ENCODE measurements at regions of chr10 and their contacts with region 1.

Region 1: DNA sequence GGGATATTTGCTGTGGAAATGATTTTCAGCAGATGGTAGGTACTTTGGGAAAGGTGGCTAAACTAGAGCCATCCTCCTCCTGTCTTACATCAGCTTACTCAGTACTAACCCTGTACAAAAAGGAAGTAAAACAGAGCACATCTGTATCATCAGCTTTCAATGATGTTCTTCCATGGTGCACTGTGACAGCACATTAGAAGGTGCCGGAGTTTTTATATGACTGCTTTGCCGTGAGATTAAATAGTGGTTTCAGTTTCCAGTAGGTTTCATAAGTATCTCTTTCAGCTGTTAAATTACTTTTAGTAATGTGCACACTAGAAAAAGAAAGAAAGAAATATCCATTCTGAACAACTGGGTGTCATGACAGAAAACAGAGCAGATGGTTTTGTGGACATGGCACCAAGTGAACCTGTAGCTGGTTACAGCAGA is 86.5 kb downstream of the ARID5B start:
- DNase-seq: no peak
- ATAC-seq: peak; percentile 90
- H3K4me3 Mint-ChIP-seq: peak overlapping the region; percentile 79
- H3K27ac Mint-ChIP-seq: peak overlapping the region; percentile 97
- H3K4me1 Mint-ChIP-seq: peaks cover 92% of the 10 kb centered on the region
- H3K27me3 Mint-ChIP-seq: no peaks in the 10 kb centered on the region
- CTCF ChIP-seq: no peak

Region 2: DNA sequence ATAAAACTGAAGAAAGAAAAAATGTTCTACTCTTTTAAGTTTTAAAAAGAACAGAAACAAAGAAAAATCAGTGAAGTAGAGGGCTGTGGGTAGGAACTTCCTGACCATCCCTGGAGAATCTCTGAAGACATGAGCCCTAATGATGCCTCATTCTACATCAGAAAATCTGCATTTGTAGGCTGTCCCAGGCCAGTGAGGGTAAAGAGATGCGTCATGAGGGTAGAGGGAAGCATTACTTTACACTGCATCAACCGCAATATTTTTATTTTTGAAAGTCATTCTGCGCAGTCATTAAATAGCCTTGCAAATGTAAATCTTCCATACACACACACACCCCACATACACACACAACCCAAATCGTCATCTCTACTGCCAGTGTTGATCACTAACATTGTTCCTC is 407.4 kb before region 1 on chr10:
- CTCF ChIA-PET with region 1: no interaction called
- POLR2A ChIA-PET with region 1: no interaction called
- intact Hi-C with region 1: no loop called
- DNase-seq: no peak
- ATAC-seq: no peak
- H3K4me3 Mint-ChIP-seq: no peak overlapping the region
- H3K27ac Mint-ChIP-seq: no peak overlapping the region
- H3K4me1 Mint-ChIP-seq: no peaks in the 10 kb centered on the region
- H3K27me3 Mint-ChIP-seq: peaks cover 4% of the 10 kb centered on the region
- CTCF ChIP-seq: no peak

Region 3: GRCh38 chr10:61896854-61897661 is 90.9 kb before region 1 on chr10:
- CTCF ChIA-PET with region 1: interaction called, 18 read pairs
- POLR2A ChIA-PET with region 1: interaction called, 270 read pairs
- intact Hi-C with region 1: loop called (anchors 1 kb)
- DNase-seq: peak; percentile 43
- ATAC-seq: peak; percentile 71
- H3K4me3 Mint-ChIP-seq: peak overlapping the region; percentile 97
- H3K27ac Mint-ChIP-seq: peak overlapping the region; percentile 98
- H3K4me1 Mint-ChIP-seq: peaks cover 37% of the 10 kb centered on the region
- H3K27me3 Mint-ChIP-seq: no peaks in the 10 kb centered on the region
- CTCF ChIP-seq: no peak

Region 4: GRCh38 chr10:61961278-61961677 is 26.7 kb before region 1 on chr10:
- CTCF ChIA-PET with region 1: no interaction called
- POLR2A ChIA-PET with region 1: interaction called, 21 read pairs
- intact Hi-C with region 1: loop called (anchors 2 kb)
- DNase-seq: no peak
- ATAC-seq: peak; percentile 52
- H3K4me3 Mint-ChIP-seq: peak overlapping the region; percentile 35
- H3K27ac Mint-ChIP-seq: peak overlapping the region; percentile 88
- H3K4me1 Mint-ChIP-seq: peaks cover 87% of the 10 kb centered on the region
- H3K27me3 Mint-ChIP-seq: no peaks in the 10 kb centered on the region
- CTCF ChIP-seq: no peak

Region 5: DNA sequence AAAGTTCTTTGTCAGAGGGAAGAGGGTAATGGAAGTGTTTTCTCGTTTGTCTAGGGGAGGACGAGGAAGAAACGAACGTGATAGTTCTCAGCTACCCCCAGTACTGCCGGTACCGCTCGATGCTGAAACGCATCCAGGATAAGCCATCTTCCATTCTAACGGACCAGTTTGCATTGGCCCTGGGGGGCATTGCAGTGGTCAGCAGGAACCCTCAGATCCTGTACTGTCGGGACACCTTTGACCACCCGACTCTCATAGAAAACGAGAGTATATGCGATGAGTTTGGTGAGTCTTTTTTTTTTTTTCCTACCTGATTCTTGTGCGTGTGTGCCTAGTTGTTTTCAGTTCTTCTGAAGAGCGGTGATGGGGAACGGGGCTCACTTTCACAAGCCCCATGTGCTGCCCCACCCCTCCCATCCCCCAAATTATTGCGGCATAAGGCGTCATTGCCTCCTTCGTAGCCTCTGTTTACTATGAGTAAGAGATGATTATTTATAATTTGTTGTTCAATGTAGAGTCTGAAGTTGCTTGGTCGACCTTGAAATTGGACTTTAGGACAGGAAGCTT is 12.2 kb after region 1 on chr10:
- CTCF ChIA-PET with region 1: interaction called, 4 read pairs
- POLR2A ChIA-PET with region 1: interaction called, 49 read pairs
- intact Hi-C with region 1: loop called (anchors 1 kb)
- DNase-seq: peak; percentile 60
- ATAC-seq: peak; percentile 86
- H3K4me3 Mint-ChIP-seq: peak overlapping the region; percentile 77
- H3K27ac Mint-ChIP-seq: peak overlapping the region; percentile 100
- H3K4me1 Mint-ChIP-seq: peaks cover 95% of the 10 kb centered on the region
- H3K27me3 Mint-ChIP-seq: no peaks in the 10 kb centered on the region
- CTCF ChIP-seq: no peak

Region 6: DNA sequence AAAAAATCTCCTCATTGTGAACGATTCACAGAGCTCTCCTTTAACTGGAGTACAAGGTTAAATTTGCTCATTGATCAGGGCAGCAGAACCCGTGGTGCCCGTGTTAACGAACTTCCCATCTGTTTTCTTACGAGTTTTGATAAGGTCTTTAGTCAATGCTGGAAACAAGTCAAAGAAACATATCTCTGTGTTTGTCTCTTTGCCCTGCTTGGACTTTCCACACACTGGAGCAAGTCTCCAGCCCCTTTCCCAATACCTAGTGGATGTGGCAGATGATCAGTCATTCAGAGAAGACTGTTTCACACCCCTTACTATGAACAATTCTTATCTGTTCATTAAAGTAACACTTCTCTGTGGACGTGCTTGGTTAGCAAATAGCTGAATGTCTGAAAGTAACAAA is 34.9 kb after region 1 on chr10:
- CTCF ChIA-PET with region 1: interaction called, 10 read pairs
- POLR2A ChIA-PET with region 1: interaction called, 65 read pairs
- intact Hi-C with region 1: loop called (anchors 1 kb)
- DNase-seq: no peak
- ATAC-seq: no peak
- H3K4me3 Mint-ChIP-seq: peak overlapping the region; percentile 55
- H3K27ac Mint-ChIP-seq: peak overlapping the region; percentile 96
- H3K4me1 Mint-ChIP-seq: peaks cover 93% of the 10 kb centered on the region
- H3K27me3 Mint-ChIP-seq: no peaks in the 10 kb centered on the region
- CTCF ChIP-seq: no peak

Region 7: GRCh38 chr10:63666836-63667383 is 1678.9 kb after region 1 on chr10:
- CTCF ChIA-PET with region 1: no interaction called
- POLR2A ChIA-PET with region 1: no interaction called
- intact Hi-C with region 1: no loop called
- DNase-seq: no peak
- ATAC-seq: no peak
- H3K4me3 Mint-ChIP-seq: no peak overlapping the region
- H3K27ac Mint-ChIP-seq: no peak overlapping the region
- H3K4me1 Mint-ChIP-seq: no peaks in the 10 kb centered on the region
- H3K27me3 Mint-ChIP-seq: no peaks in the 10 kb centered on the region
- CTCF ChIP-seq: no peak